ENCODE measurements at regions of chr3 and their contacts with region 1.

Region 1: GRCh38 chr3:78116874-78117273 is 1077.0 kb downstream of the ROBO2 start:
- DNase-seq: no peak

Region 2: DNA sequence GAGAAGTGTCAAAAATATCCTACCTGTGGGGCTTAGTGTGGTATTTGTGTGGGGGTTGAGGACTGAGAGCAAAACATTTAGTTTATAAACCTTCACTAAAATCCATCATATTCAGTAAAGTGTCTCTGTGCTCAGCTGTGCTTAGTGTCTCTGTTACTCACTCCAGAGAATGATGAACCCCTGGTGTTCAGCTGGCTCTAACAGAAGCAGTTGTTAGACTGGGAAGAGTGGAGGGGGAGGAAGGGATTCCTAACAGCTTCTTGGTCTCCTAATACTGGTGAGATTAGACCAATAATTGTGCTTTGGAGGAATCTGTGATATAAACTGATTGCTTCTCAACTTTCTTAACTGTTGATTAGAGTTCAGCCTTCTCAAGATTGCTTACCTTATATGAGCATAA is 46.5 kb after region 1 on chr3:
- intact Hi-C with region 1: loop called in 1 of 2 experiments (anchors 5 kb)
- DNase-seq: no peak

Region 3: GRCh38 chr3:78338405-78338804 is 221.5 kb after region 1 on chr3:
- intact Hi-C with region 1: no loop called
- DNase-seq: no peak

Measured in posterior vena cava (tissue), 2 donors.